ENCODE measurements at regions of chr1 and their contacts with region 1.

Region 1: GRCh38 chr1:211133836-211134669 is at the start of gene KCNH1:
- DNase-seq: peak; percentile 74
- ATAC-seq: peak; percentile 97
- total RNA-seq, gene KCNH1: not detected

Region 2: GRCh38 chr1:210407207-210407886 is 726.7 kb before region 1 on chr1:
- intact Hi-C with region 1: loop called (anchors 1 kb)
- DNase-seq: no peak
- ATAC-seq: no peak

Region 3: DNA sequence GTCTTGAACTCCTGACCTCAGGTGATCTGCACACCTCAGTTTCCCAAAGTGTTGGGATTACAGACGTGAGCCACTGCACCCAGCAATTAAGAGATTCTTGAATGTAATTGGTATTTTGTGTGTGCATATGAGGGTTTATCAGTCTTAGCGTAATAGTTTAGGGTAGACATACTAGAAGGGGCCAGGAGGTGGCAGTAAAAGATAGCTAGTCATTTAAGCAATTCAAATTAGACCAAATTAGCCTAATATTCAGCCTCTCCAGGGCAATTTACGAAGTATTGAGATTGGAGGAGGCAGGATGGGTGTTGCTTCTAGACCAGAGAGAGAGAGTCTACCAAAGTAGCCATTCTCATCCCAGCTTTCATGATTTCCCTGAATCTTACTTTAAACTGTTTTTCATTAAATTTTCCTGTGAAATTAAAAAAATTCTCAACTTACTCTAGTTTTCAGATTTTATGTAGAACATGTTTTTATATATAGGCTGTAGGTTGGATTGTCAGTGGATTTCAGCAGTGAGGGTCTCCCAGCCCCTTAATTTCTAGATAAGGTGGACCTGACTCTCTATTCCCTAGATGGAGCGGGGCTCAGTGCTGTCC is 685.7 kb before region 1 on chr1:
- intact Hi-C with region 1: loop called (anchors 1 kb)
- DNase-seq: no peak
- ATAC-seq: no peak

Region 4: GRCh38 chr1:210584439-210585113 is 549.5 kb before region 1 on chr1:
- intact Hi-C with region 1: loop called (anchors 1 kb)
- DNase-seq: peak; percentile 83
- ATAC-seq: peak; percentile 80